Activated naive CD4-positive, alpha-beta T cell treated with anti-CD3 and anti-CD28 coated beads, Interleukin-2, amount 10 ng/mL, durations not matched to agents 7 days and 5 days (primary cell): ENCODE measurements at regions of chr15 and their contacts with region 1.

Region 1: GRCh38 chr15:55434989-55435825 is 26.9 kb downstream of the PIERCE2 start:
- DNase-seq: no peak
- H3K4me3 Mint-ChIP-seq: no peak overlapping the region
- H3K27ac Mint-ChIP-seq: no peak overlapping the region
- H3K4me1 Mint-ChIP-seq: no peaks in the 10 kb centered on the region
- H3K27me3 Mint-ChIP-seq: peaks cover 4% of the 10 kb centered on the region

Region 2: DNA sequence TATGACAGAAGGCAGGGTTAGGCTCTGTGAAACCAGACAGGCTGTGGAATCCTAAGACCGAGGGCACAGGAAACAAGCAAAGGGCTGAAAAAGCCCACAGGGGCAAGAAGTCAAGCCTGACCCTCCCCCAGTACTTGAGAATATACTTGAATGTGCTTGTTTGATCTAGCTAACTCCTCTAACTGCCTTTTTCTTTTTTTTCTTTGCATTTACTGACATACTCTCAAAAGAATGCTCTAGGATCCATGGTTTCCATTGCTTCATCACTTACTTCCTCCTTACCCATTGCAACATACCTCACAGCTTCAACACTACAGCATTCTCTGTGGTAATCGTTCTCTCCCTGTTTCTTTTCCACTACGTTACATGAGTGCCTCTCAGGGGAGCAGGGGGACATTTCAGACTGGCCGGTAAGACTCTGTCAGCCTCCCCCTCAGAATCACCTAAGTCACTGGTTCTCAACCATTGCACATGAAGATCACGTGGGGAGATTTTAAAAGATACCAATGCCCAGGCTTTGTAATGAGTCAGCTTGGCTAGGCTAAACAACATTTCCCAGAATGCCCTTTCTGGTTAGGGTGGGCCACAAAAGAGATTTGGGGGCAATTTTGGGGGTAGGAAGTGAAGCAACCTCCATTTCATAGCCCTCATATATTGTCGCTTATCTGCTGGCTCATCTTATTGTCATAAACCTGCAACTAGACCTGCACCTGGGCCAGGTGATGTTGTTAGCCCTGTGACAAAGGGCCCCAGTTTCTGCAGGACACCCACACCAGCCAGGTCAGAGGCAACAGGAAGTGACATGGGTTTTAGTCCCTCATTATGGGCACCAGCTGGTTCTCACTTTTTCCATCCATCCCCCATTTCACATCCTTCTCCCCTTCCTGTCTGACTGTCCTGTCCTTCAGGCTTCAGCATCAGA is 213.9 kb before region 1 on chr15:
- CTCF ChIA-PET with region 1: interaction called, 22 read pairs
- DNase-seq: no peak
- H3K4me3 Mint-ChIP-seq: no peak overlapping the region
- H3K27ac Mint-ChIP-seq: peak overlapping the region; percentile 76
- H3K4me1 Mint-ChIP-seq: peaks cover 85% of the 10 kb centered on the region
- H3K27me3 Mint-ChIP-seq: no peaks in the 10 kb centered on the region

Region 3: DNA sequence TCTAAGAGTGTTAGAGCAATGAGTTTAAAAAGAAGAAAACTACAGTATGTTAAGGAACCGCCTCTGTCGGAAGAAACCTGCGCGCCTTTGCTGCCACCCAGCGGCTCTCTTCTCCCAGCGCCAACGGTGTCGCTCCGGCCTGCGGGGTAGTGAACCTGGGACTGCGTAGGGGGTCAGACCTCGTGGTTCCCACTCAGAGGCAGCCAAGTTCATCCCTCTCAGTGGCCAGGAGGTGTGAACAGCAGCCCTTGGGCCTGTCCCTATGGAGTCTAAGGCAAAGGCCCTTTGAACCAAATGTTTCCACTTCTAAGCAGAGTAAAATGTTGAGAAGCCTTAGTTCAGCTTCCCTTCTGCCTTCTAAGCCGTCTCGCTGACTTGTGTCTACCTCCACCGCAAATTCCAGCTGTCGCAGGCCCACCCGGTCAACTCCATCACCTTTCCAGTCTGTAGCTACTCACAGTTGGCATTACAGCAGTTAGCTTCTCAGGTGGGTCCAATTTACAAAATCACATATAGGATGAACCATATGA is 144.6 kb before region 1 on chr15:
- CTCF ChIA-PET with region 1: interaction called, 11 read pairs
- DNase-seq: peak; percentile 88
- H3K4me3 Mint-ChIP-seq: peak overlapping the region; percentile 91
- H3K27ac Mint-ChIP-seq: peak overlapping the region; percentile 91
- H3K4me1 Mint-ChIP-seq: peaks cover 32% of the 10 kb centered on the region
- H3K27me3 Mint-ChIP-seq: peaks cover 4% of the 10 kb centered on the region

Region 4: GRCh38 chr15:55407949-55408791 is 27.0 kb before region 1 on chr15 and contains the starts of genes CCPG1 and PIERCE2:
- CTCF ChIA-PET with region 1: interaction called, 16 read pairs
- DNase-seq: peak; percentile 92
- H3K4me3 Mint-ChIP-seq: peak within 1 kb of the TSS; percentile 76
- H3K27ac Mint-ChIP-seq: peak within 1 kb of the TSS; percentile 86
- H3K4me1 Mint-ChIP-seq: peaks cover 27% of the 10 kb centered on the region
- H3K27me3 Mint-ChIP-seq: peaks cover 5% of the 10 kb centered on the region